Activated B cell treated with CpG ODN at 0.5 μM for 24 hours (primary cell): ENCODE measurements at regions of chr5 and their contacts with region 1.

Region 1: DNA sequence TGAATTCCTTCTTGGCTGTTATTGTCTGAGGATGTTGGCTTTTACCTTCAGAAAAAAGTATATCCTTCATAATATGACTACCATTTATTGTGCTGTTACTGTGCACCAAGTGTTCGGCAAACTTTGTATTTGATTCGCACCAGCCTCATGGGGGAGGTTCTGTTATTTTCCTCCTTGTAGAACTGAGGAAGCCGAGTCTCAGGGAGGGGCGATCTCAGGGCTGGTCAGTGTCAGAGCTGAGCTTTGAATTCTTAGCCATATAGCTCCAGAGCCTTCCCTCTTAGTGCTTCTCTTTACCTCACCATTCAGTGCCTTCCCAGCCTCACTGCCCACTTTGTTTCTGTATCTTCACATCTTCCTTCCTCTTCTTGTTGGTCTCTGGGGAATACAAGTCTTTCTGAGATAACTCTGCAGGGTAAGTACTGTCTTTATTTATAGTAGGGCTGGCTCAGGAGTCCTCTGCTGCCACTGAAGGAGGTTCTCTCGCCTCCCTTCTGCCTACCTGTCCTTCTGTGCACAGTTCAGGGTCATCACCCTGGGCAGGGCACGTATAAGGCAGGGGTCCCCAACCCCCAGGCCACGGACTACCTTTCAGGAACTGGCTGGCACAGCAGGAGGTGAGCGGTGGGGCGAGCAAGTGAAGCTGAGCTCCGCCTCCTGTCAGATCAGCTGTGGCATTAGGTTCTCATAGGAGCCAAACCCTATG is 48.4 kb downstream of the GALNT10 start:
- DNase-seq: peak; percentile 50
- ATAC-seq: peak; percentile 97
- H3K4me3 Mint-ChIP-seq: peak overlapping the region; percentile 25
- H3K27ac Mint-ChIP-seq: peak overlapping the region; percentile 43
- H3K4me1 Mint-ChIP-seq: peaks cover 67% of the 10 kb centered on the region
- H3K27me3 Mint-ChIP-seq: no peaks in the 10 kb centered on the region
- CTCF ChIP-seq: no peak

Region 2: DNA sequence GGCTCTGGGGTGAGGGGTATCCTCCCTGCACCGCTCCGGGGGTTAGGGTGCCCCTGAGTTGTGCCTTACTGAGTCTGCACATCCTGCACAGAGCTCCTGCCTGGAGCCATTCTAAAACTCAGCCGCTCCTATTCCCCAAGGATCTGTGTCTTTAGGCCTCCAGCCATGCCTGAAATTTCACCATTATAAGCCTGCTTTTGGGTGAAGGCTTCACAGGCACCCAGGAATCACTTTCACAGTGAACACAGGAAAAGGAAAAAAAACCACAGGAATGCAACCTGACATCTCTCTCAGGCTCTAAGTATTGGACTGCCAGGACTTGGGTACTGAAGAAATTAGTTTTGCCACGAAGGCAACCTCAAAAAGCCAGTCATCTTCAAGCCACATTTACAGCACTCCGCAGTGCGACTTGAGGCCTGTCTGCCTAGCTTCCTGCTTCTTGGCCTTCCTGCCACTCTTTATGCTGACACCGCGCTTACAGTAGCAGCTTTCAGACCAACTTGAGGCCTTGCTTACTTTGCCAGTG is 17.5 kb before region 1 on chr5:
- CTCF ChIA-PET with region 1: interaction called, 4 read pairs
- POLR2A ChIA-PET with region 1: interaction called, 4 read pairs
- intact Hi-C with region 1: loop called (anchors 2 kb)
- DNase-seq: no peak
- ATAC-seq: peak; percentile 60
- H3K4me3 Mint-ChIP-seq: no peak overlapping the region
- H3K27ac Mint-ChIP-seq: peak overlapping the region; percentile 82
- H3K4me1 Mint-ChIP-seq: peaks cover 27% of the 10 kb centered on the region
- H3K27me3 Mint-ChIP-seq: no peaks in the 10 kb centered on the region
- CTCF ChIP-seq: no peak

Region 3: GRCh38 chr5:154228696-154229095 is 10.2 kb before region 1 on chr5:
- CTCF ChIA-PET with region 1: interaction called, 4 read pairs
- POLR2A ChIA-PET with region 1: no interaction called
- intact Hi-C with region 1: loop called (anchors 1 kb)
- DNase-seq: no peak
- ATAC-seq: peak; percentile 88
- H3K4me3 Mint-ChIP-seq: peak overlapping the region; percentile 84
- H3K27ac Mint-ChIP-seq: peak overlapping the region; percentile 87
- H3K4me1 Mint-ChIP-seq: peaks cover 37% of the 10 kb centered on the region
- H3K27me3 Mint-ChIP-seq: no peaks in the 10 kb centered on the region
- CTCF ChIP-seq: no peak

Region 4: DNA sequence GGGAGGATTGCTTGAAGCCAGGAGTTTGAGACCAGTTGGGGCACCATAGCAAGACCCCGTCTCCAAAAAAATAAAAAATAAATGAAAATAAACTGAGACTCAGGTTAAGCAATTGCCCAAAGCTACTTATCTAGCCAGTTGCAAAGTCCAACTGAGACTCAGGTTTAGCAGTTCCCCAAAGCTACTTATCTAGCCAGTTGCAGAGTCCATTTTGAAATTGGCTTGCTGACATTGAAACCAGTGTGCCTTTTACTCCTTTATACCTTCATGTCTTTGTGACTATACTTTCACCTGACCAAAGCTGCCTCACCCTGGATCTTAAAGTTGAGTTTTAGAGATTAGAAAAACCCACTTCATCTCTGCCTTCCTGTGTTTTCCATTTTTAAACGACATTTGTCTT is 18.1 kb after region 1 on chr5:
- CTCF ChIA-PET with region 1: no interaction called
- POLR2A ChIA-PET with region 1: interaction called, 9 read pairs
- intact Hi-C with region 1: loop called (anchors 2 kb)
- DNase-seq: no peak
- ATAC-seq: no peak
- H3K4me3 Mint-ChIP-seq: no peak overlapping the region
- H3K27ac Mint-ChIP-seq: no peak overlapping the region
- H3K4me1 Mint-ChIP-seq: peaks cover 27% of the 10 kb centered on the region
- H3K27me3 Mint-ChIP-seq: no peaks in the 10 kb centered on the region
- CTCF ChIP-seq: no peak

Region 5: DNA sequence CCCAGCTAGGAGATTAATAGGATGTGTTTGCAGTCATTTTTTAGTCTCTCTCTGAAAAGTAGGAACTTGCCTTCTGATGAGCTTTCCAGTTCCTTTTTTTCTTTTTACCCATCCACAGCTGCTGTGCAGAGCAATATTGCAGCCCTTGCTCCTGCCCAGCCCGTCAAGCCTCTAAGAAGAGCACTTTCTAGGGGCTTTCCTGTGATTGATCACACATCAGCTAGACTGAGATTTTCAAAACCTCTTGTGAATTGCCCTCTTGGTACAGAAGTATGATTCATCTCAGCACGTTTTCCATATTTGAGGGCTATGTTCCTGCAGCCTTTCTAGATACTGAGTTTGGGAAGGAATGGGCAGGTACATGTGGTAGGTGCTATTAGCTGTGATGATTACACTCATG is 45.5 kb after region 1 on chr5:
- CTCF ChIA-PET with region 1: no interaction called
- POLR2A ChIA-PET with region 1: no interaction called
- intact Hi-C with region 1: loop called (anchors 1 kb)
- DNase-seq: no peak
- ATAC-seq: peak; percentile 97
- H3K4me3 Mint-ChIP-seq: no peak overlapping the region
- H3K27ac Mint-ChIP-seq: peak overlapping the region; percentile 47
- H3K4me1 Mint-ChIP-seq: peaks cover 45% of the 10 kb centered on the region
- H3K27me3 Mint-ChIP-seq: no peaks in the 10 kb centered on the region
- CTCF ChIP-seq: no peak

Region 6: GRCh38 chr5:154384480-154385235 is 145.7 kb after region 1 on chr5:
- CTCF ChIA-PET with region 1: no interaction called
- POLR2A ChIA-PET with region 1: no interaction called
- intact Hi-C with region 1: loop called (anchors 1 kb)
- DNase-seq: peak; percentile 28
- ATAC-seq: peak; percentile 87
- H3K4me3 Mint-ChIP-seq: peak overlapping the region; percentile 79
- H3K27ac Mint-ChIP-seq: peak overlapping the region; percentile 85
- H3K4me1 Mint-ChIP-seq: peaks cover 33% of the 10 kb centered on the region
- H3K27me3 Mint-ChIP-seq: no peaks in the 10 kb centered on the region
- CTCF ChIP-seq: no peak